Activated T-helper 1 cell treated with anti-CD3 and anti-CD28 coated beads, Interleukin-12 subunit alpha, Interleukin-12 subunit beta, Interleukin-2, Interleukin-4 antibody, amounts not matched to agents 30 ng/mL and 10 ng/mL and 1 ng/mL, durations not matched to agents 14 hours and 24 hours and 36 hours (primary cell): ENCODE measurements at regions of chr2 and their contacts with region 1.

Region 1: DNA sequence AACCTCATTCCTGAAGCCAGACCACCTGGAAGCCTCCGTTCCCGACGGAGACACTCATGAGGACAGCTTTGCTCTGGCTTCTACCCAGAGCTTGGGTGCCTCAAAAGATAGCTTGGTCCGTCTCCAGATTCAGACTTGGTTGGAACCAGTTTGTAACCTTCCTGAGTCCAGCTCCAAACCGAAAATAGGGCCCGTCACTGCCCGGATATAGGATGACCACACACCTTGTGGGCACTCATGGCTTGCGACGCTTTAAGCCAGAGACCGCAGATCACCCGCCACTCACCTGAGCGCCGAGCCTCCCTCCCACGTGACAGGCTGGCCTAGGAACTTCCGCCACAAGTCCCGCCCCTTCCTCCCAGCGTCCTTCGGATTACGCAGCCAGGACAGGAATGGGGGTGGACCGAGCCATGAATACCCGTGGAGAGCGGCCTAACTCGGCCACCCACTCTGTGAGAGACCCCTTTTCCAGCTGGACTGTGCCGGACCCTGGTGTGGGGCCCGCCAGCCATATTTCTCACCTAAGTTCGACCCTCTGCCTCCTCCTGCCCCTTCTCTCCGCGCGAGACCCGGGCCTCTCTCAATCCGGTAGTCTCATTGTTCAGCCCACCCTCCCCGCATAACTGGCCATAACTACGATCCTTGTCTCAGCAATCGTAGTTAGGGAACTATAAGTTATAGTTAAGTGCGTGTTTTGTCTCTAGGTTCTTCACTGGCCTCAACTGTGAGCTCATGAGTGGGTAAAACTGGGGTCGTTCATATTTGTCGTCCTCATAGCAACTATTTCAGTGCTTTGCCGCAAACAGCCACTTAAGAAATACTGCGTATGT is at the start of gene MPV17:
- DNase-seq: peak; percentile 84
- H3K4me3 Mint-ChIP-seq: peak within 1 kb of the TSS; percentile 99
- H3K27ac Mint-ChIP-seq: peak within 1 kb of the TSS; percentile 88
- H3K4me1 Mint-ChIP-seq: peaks cover 32% of the 10 kb centered on the region
- H3K27me3 Mint-ChIP-seq: no peaks in the 10 kb centered on the region
- total RNA-seq, gene MPV17: 85.9 and 89.9 TPM in 2 replicates

Region 2: DNA sequence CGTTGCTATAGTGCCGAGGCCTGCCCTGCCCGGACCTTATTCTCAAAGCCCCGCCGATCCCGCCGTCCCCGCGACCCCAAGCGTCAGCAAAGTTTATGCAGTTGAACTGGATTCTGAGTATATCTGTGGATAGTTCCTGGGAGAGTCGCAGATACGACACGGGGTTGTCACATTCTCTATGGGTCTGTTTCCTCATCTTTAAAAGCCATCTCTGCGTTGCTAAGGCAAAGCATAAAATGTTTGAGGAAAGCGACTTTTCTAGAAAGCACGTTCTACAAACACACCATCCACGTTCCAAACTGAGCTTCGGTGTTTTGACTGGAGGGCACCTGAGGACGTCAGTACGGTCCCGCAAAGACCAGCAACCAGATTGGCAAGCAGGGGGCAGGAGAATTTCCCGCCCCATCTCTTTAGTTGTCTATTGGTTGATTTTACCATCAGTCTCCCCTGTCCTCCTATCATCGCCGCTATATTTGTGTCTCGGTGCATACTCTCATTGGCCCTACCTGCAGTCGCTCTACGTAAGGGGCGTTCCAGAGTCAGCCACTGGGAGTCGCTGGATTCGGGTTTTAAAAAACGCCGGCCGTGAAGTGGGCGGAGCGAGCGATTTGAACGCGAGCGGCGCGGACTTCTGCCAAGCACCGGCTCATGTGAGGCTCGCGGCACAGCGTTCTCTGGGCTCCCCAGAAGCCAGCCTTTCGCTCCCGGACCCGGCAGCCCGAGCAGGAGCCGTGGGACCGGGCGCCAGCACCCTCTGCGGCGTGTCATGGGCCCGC is 537.4 kb before region 1 on chr2 and contains the start of gene CENPA:
- intact Hi-C with region 1: loop called (anchors 2 kb)
- DNase-seq: peak; percentile 94
- H3K4me3 Mint-ChIP-seq: peak within 1 kb of the TSS; percentile 96
- H3K27ac Mint-ChIP-seq: peak within 1 kb of the TSS; percentile 89
- H3K4me1 Mint-ChIP-seq: peaks cover 33% of the 10 kb centered on the region
- H3K27me3 Mint-ChIP-seq: no peaks in the 10 kb centered on the region
- total RNA-seq, gene CENPA: 16.6 and 19.7 TPM in 2 replicates

Region 3: DNA sequence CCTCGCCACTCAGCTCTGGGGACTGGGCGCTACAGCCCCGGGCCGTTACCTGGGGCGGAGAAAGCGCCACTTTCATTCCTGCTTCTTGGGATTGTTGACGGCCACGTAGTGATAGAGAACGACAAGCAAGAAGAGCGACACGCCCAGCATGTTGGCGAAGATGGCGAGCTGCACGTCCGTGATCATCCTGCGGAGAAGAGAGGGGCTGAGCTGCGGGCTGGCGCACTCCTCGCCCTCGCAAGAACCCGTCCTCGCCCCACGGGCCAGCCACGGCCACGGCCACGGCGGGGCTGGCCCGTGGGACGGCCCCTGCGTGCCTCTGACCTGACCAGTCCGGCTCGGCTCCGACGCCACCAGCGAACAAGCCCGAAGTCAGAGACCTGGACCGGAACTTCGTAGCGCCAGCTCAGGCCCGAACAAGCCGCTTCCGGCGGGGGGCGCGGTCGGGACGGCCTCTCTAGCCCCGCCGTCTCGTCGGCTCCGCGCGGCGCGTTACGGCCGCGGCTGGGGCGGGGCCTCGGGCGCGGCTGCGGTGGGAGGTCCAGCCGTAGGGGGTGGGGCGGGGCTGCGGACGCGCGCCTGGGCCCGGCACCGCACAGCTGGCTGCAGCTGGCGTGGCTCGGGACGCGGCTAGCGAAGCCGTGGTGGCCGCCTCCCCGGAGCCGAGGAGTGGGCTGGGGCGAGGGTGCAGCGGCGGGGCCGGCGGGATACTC is 251.5 kb before region 1 on chr2 and contains the start of gene OST4:
- intact Hi-C with region 1: loop called (anchors 1 kb)
- DNase-seq: peak; percentile 91
- H3K4me3 Mint-ChIP-seq: peak within 1 kb of the TSS; percentile 99
- H3K27ac Mint-ChIP-seq: peak within 1 kb of the TSS; percentile 98
- H3K4me1 Mint-ChIP-seq: peaks cover 84% of the 10 kb centered on the region
- H3K27me3 Mint-ChIP-seq: peaks cover 2% of the 10 kb centered on the region
- total RNA-seq, gene OST4: 322 and 332 TPM in 2 replicates

Region 4: GRCh38 chr2:27211829-27212627 is 111.0 kb before region 1 on chr2 and contains the starts of genes ATRAID and SLC5A6:
- intact Hi-C with region 1: loop called (anchors 1 kb)
- DNase-seq: peak; percentile 90
- H3K4me3 Mint-ChIP-seq: peak within 1 kb of the TSS; percentile 99
- H3K27ac Mint-ChIP-seq: peak within 1 kb of the TSS; percentile 100
- H3K4me1 Mint-ChIP-seq: peaks cover 53% of the 10 kb centered on the region
- H3K27me3 Mint-ChIP-seq: no peaks in the 10 kb centered on the region
- total RNA-seq, gene ATRAID: 107 and 111 TPM in 2 replicates
- total RNA-seq, gene SLC5A6: 89.2 and 105 TPM in 2 replicates

Region 5: DNA sequence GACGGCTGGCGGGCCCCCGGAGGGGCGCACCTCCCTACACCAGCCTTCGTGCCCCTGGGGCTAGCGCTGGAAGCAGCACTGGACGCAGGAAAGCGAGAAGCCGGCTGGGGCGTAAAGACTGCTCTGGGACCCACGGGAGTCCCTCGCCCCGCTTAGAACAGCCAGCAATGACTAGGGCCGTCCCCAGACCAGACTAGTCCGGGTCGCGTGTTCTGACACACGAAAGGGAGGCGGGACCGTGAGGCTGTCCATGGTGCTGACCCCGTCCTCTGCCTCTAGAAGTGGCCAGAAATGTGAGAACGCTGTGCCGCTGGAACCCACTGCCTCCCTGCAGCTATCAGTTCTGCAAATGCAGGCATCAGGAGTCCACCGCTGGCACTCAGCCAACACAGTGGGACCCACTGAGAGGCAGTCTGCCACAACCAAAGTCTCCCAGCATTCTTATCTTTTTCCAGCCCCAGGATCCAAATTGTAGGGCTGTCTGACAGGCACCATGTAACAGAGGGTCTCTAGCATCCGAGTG is 14.6 kb before region 1 on chr2 and contains the start of gene UCN:
- intact Hi-C with region 1: loop called (anchors 2 kb)
- DNase-seq: no peak
- H3K4me3 Mint-ChIP-seq: no peak within 1 kb of the TSS
- H3K27ac Mint-ChIP-seq: no peak within 1 kb of the TSS
- H3K4me1 Mint-ChIP-seq: peaks cover 1% of the 10 kb centered on the region
- H3K27me3 Mint-ChIP-seq: peaks cover 17% of the 10 kb centered on the region
- total RNA-seq, gene UCN: 1.4 and 1.8 TPM in 2 replicates

Region 6: GRCh38 chr2:27421028-27421427 is 98.0 kb after region 1 on chr2:
- intact Hi-C with region 1: no loop called
- DNase-seq: no peak
- H3K4me3 Mint-ChIP-seq: no peak overlapping the region
- H3K27ac Mint-ChIP-seq: no peak overlapping the region
- H3K4me1 Mint-ChIP-seq: no peaks in the 10 kb centered on the region
- H3K27me3 Mint-ChIP-seq: peaks cover 4% of the 10 kb centered on the region